ENCODE measurements at regions of chr10 and their contacts with region 1.

Region 1: DNA sequence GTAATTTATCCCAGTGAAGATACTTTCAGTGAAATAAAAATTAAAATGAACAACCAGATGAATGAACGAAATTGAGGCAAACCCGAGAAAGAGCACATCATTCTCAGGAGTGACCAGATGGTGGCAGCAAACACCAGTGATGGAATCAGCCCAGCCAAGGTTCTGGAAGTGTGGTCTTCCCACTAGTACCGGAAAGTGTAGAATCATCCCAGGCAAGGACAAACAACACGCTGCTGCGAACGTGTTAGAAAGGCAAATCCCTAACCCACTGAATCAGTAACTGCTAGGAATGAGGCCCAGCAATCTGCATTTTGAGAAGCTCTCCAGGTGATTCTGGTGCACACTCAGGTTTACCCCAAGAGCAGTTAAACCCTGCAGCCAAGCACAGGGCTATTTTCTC is 15.5 kb upstream of the SLC18A3 start:
- DNase-seq: peak; percentile 41
- H3K4me3 ChIP-seq: no peak overlapping the region
- H3K27ac ChIP-seq: no peak overlapping the region
- H3K4me1 ChIP-seq: no peaks in the 10 kb centered on the region
- CTCF ChIP-seq: peak; percentile 93

Region 2: DNA sequence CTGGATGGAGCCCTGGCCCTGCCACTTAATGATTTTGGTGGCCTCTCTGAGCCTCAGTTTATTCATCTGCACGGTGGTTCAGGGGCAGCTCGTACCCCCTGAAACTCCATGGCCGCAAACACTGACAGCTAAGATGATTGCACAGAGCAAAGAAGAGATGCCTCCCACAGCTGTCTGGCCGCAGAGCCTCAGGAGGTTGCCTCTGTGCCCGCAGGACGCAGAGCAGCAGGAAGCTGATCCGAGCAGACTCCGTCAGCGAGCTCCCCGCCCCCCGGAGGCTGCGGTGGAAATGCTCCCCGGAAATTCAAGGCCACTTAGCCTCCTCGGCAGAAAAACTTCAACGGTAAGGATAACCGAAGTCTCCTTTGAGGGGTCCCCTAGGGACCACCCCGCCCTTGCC is 54.7 kb after region 1 on chr10:
- CTCF ChIA-PET with region 1: no interaction called
- POLR2A ChIA-PET with region 1: no interaction called
- intact Hi-C with region 1: no loop called
- DNase-seq: no peak
- H3K4me3 ChIP-seq: no peak overlapping the region
- H3K27ac ChIP-seq: no peak overlapping the region
- H3K4me1 ChIP-seq: no peaks in the 10 kb centered on the region
- CTCF ChIP-seq: no peak

Region 3: GRCh38 chr10:49844821-49845597 is 250.4 kb after region 1 on chr10:
- CTCF ChIA-PET with region 1: no interaction called
- POLR2A ChIA-PET with region 1: no interaction called
- intact Hi-C with region 1: no loop called
- DNase-seq: no peak
- H3K4me3 ChIP-seq: no peak overlapping the region
- H3K27ac ChIP-seq: no peak overlapping the region
- H3K4me1 ChIP-seq: no peaks in the 10 kb centered on the region
- CTCF ChIP-seq: no peak

Region 4: GRCh38 chr10:50224330-50224952 is 629.8 kb after region 1 on chr10:
- CTCF ChIA-PET with region 1: interaction called, 3 read pairs
- POLR2A ChIA-PET with region 1: no interaction called
- intact Hi-C with region 1: loop called (anchors 2 kb)
- DNase-seq: peak; percentile 68
- H3K4me3 ChIP-seq: no peak overlapping the region
- H3K27ac ChIP-seq: no peak overlapping the region
- H3K4me1 ChIP-seq: no peaks in the 10 kb centered on the region
- CTCF ChIP-seq: peak; percentile 81

Measured in OCI-LY7 (cell line).